OCI-LY7 (cell line): ENCODE measurements at regions of chr3 and their contacts with region 1.

Region 1: GRCh38 chr3:170128977-170129431 is 52.5 kb downstream of the PHC3 start:
- DNase-seq: peak; percentile 58
- H3K4me3 ChIP-seq: peak overlapping the region; percentile 61
- H3K27ac ChIP-seq: peak overlapping the region; percentile 96
- H3K4me1 ChIP-seq: peaks cover 94% of the 10 kb centered on the region
- CTCF ChIP-seq: 0 out of 2 replicates have a peak, but pooled peaks have one; percentile 2

Region 2: DNA sequence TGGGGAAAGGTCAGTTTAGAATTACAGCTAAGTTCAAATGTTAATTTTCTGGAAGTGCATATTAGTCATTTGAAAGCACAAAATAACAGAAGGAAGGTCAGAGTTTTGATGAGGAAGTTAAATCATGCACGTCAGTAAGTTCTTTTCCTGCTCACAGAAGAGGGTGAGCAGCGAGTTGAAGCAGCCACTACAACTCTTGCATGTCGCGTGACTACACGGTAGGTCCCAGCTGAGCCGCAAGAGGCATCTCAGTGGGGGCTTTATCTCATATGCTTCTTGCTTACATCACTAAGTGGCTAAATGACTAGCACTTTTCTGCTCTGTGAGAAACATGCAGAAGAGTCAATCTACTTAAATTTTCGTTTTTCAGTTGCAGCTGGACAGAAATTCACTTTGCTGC is 183.7 kb before region 1 on chr3:
- CTCF ChIA-PET with region 1: no interaction called
- POLR2A ChIA-PET with region 1: interaction called, 5 read pairs
- intact Hi-C with region 1: loop called (anchors 5 kb)
- DNase-seq: peak; percentile 93
- H3K4me3 ChIP-seq: peak overlapping the region; percentile 55
- H3K27ac ChIP-seq: peak overlapping the region; percentile 99
- H3K4me1 ChIP-seq: peaks cover 98% of the 10 kb centered on the region
- CTCF ChIP-seq: 0 out of 2 replicates have a peak, but pooled peaks have one; percentile 35

Region 3: GRCh38 chr3:170117134-170117533 is 11.9 kb before region 1 on chr3:
- CTCF ChIA-PET with region 1: no interaction called
- POLR2A ChIA-PET with region 1: interaction called, 12 read pairs
- intact Hi-C with region 1: no loop called
- DNase-seq: peak; percentile 10
- H3K4me3 ChIP-seq: no peak overlapping the region
- H3K27ac ChIP-seq: no peak overlapping the region
- H3K4me1 ChIP-seq: peaks cover 9% of the 10 kb centered on the region
- CTCF ChIP-seq: peak; percentile 45

Region 4: GRCh38 chr3:170154569-170155143 is 25.7 kb after region 1 on chr3:
- CTCF ChIA-PET with region 1: interaction called, 3 read pairs
- POLR2A ChIA-PET with region 1: interaction called, 86 read pairs
- intact Hi-C with region 1: loop called (anchors 1 kb)
- DNase-seq: peak; percentile 90
- H3K4me3 ChIP-seq: peak overlapping the region; percentile 52
- H3K27ac ChIP-seq: peak overlapping the region; percentile 98
- H3K4me1 ChIP-seq: peaks cover 82% of the 10 kb centered on the region
- CTCF ChIP-seq: no peak

Region 5: GRCh38 chr3:170171563-170171962 is 42.6 kb after region 1 on chr3:
- CTCF ChIA-PET with region 1: no interaction called
- POLR2A ChIA-PET with region 1: interaction called, 11 read pairs
- intact Hi-C with region 1: no loop called
- DNase-seq: no peak
- H3K4me3 ChIP-seq: peak overlapping the region; percentile 10
- H3K27ac ChIP-seq: peak overlapping the region; percentile 45
- H3K4me1 ChIP-seq: peaks cover 40% of the 10 kb centered on the region
- CTCF ChIP-seq: no peak

Region 6: GRCh38 chr3:170357176-170357919 is 228.3 kb after region 1 on chr3 and contains the start of gene SKIL:
- CTCF ChIA-PET with region 1: no interaction called
- POLR2A ChIA-PET with region 1: no interaction called
- intact Hi-C with region 1: loop called (anchors 5 kb)
- DNase-seq: peak; percentile 97
- H3K4me3 ChIP-seq: peak within 1 kb of the TSS; percentile 97
- H3K27ac ChIP-seq: peak within 1 kb of the TSS; percentile 94
- H3K4me1 ChIP-seq: peaks cover 54% of the 10 kb centered on the region
- CTCF ChIP-seq: no peak
- total RNA-seq, gene SKIL: 60.9 and 82.6 TPM in 2 replicates